CD4-positive, alpha-beta memory T cell (primary cell): ENCODE measurements at regions of chr6 and their contacts with region 1.

Region 1: GRCh38 chr6:6556738-6557505 is 31.6 kb upstream of the LY86 start:
- DNase-seq: peak; percentile 26 to 53 (median 44)
- H3K4me3 ChIP-seq: no peak overlapping the region
- H3K4me3 Mint-ChIP-seq: no peak overlapping the region
- H3K27ac ChIP-seq: no peak overlapping the region
- H3K27ac Mint-ChIP-seq: peak overlapping the region in 3 of 7 donors; percentile 26 to 67 (median 34)
- H3K4me1 ChIP-seq: no peaks in the 10 kb centered on the region
- H3K4me1 Mint-ChIP-seq: peaks cover 1 to 6% (median 4%) of the 10 kb centered on the region in 4 donors
- H3K27me3 ChIP-seq: no peaks in the 10 kb centered on the region
- H3K27me3 Mint-ChIP-seq: peaks cover 1 to 4% of the 10 kb centered on the region in 2 donors

Region 2: GRCh38 chr6:4805553-4806336 is 1751.2 kb before region 1 on chr6:
- CTCF ChIA-PET with region 1: no interaction called
- POLR2A ChIA-PET with region 1: no interaction called
- intact Hi-C with region 1: no loop called
- DNase-seq: peak in 1 of 5 donors; percentile 10
- H3K4me3 ChIP-seq: no peak overlapping the region
- H3K4me3 Mint-ChIP-seq: peak overlapping the region in 1 of 8 donors; percentile 20
- H3K27ac ChIP-seq: no peak overlapping the region
- H3K27ac Mint-ChIP-seq: peak overlapping the region in 1 of 7 donors; percentile 72
- H3K4me1 ChIP-seq: peaks cover 26% of the 10 kb centered on the region
- H3K4me1 Mint-ChIP-seq: peaks cover 51 to 83% (median 68%) of the 10 kb centered on the region in 4 donors
- H3K27me3 ChIP-seq: no peaks in the 10 kb centered on the region
- H3K27me3 Mint-ChIP-seq: peaks cover 0 to 1% of the 10 kb centered on the region in 2 donors

Region 3: GRCh38 chr6:6654599-6655575 is 98.0 kb after region 1 on chr6:
- CTCF ChIA-PET with region 1: no interaction called
- POLR2A ChIA-PET with region 1: no interaction called
- intact Hi-C with region 1: loop called (anchors 2 kb)
- DNase-seq: peak in 4 of 5 donors; percentile 25 to 45 (median 38)
- H3K4me3 ChIP-seq: no peak overlapping the region
- H3K4me3 Mint-ChIP-seq: peak overlapping the region in 7 of 8 donors; percentile 26 to 83 (median 66)
- H3K27ac ChIP-seq: no peak overlapping the region
- H3K27ac Mint-ChIP-seq: peak overlapping the region; percentile 3 to 94 (median 87)
- H3K4me1 ChIP-seq: peaks cover 52% of the 10 kb centered on the region
- H3K4me1 Mint-ChIP-seq: peaks cover 20 to 76% (median 58%) of the 10 kb centered on the region in 4 donors
- H3K27me3 ChIP-seq: no peaks in the 10 kb centered on the region
- H3K27me3 Mint-ChIP-seq: no peaks in the 10 kb centered on the region

Region 4: DNA sequence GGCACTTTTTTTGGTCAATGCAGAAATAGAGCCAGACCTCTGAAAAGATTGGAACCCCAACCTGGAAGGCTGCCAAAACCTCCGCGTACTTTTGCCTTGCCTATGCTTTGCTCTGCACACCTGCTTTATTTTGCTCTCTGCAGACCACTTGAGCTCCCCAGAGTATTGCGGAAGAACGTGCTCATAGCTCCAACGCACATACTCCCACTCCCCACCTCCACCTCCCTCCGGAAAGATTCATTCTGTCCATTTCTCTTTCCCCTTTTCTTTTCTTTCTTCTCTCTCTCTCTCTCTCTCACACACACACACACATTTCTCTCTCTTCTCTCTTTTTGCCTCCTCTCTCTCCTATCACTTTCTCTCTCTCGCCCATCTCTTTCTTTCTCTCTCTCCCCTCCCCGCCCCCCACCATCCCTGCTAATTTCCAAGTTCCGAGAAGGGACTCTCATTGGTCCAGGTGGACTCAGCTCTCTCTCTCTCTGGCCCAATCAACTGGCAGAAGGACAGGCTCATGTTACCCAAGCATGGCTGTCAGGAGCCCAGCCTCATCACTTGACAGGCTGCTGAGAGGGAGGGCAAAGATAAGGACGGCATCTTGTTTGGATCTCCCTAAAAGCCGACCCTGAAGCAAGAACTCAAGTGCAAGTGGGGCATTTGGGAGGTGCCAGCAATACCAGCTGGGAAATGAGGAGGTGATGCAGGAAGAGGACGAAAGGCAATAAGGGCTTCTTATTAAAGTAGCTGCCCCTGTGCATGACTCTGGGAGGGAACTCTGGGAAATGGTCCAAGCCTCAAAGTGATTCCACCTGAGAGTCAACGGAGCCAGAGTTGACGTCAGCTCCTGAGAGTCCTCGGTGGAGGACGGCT is 277.7 kb after region 1 on chr6:
- CTCF ChIA-PET with region 1: no interaction called
- POLR2A ChIA-PET with region 1: no interaction called
- intact Hi-C with region 1: no loop called
- DNase-seq: no peak
- H3K4me3 ChIP-seq: no peak overlapping the region
- H3K4me3 Mint-ChIP-seq: no peak overlapping the region
- H3K27ac ChIP-seq: no peak overlapping the region
- H3K27ac Mint-ChIP-seq: no peak overlapping the region
- H3K4me1 ChIP-seq: no peaks in the 10 kb centered on the region
- H3K4me1 Mint-ChIP-seq: no peaks in the 10 kb centered on the region
- H3K27me3 ChIP-seq: no peaks in the 10 kb centered on the region
- H3K27me3 Mint-ChIP-seq: peaks cover 7 to 22% of the 10 kb centered on the region in 2 donors

Region 5: GRCh38 chr6:6942831-6943230 is 385.9 kb after region 1 on chr6:
- CTCF ChIA-PET with region 1: no interaction called
- POLR2A ChIA-PET with region 1: no interaction called
- intact Hi-C with region 1: no loop called
- DNase-seq: no peak
- H3K4me3 ChIP-seq: no peak overlapping the region
- H3K4me3 Mint-ChIP-seq: peak overlapping the region in 2 of 8 donors; percentile 26 to 51
- H3K27ac ChIP-seq: no peak overlapping the region
- H3K27ac Mint-ChIP-seq: no peak overlapping the region
- H3K4me1 ChIP-seq: no peaks in the 10 kb centered on the region
- H3K4me1 Mint-ChIP-seq: peaks cover 3 to 9% (median 6%) of the 10 kb centered on the region in 4 donors
- H3K27me3 ChIP-seq: no peaks in the 10 kb centered on the region
- H3K27me3 Mint-ChIP-seq: peaks cover 0 to 1% of the 10 kb centered on the region in 2 donors